A673 (cell line): ENCODE measurements at regions of chr13 and their contacts with region 1.

Region 1: DNA sequence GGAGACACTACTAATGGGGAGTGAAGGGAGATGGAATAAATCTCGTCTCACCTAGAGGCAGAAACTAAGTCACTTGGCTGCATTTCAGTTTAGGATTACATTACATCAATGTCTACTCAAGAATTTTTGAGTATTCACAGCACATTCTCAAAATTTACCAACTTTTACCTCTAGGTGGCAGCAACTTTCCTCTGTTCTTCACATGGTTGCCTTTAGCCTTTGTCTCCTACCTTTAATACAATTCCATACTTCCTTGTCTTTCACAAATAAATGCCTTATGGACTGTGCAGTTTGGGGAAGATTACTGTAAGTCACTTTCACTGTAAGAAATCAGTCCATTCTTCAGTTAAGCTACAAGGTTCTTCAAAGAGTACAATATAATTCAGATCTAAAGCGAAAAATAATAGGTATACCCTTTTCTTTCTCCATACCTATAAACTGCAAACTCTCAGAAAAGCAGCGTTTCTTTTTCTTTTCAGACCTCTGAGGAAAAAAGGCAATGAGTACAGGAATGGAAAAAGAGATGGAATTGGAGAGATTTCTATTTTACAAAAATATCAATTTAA is 379.4 kb downstream of the KLF12 start:
- DNase-seq: peak; percentile 90
- H3K4me3 ChIP-seq: no peak overlapping the region
- H3K27ac ChIP-seq: peak overlapping the region; percentile 40
- H3K4me1 ChIP-seq: peaks cover 38% of the 10 kb centered on the region
- H3K27me3 ChIP-seq: no peaks in the 10 kb centered on the region
- CTCF ChIP-seq: peak; percentile 72

Region 2: DNA sequence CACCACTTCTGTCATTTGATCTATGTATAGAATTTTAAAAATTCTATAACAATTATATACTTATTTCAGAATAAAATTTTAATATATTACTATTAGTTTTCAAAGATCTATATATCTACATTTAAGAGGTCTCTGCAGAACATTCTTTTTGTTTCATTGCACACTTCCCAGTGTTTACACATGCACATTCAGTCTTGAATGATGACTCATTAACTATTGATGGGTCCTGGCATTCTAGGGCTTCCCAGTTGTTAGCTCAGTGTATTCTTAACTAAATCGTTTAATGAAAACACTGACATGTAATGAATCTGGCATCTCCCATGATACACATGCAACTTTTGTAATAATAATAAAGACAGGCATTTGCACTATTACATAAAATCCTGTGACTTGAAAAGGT is 54.8 kb after region 1 on chr13:
- CTCF ChIA-PET with region 1: no interaction called
- POLR2A ChIA-PET with region 1: no interaction called
- intact Hi-C with region 1: loop called (anchors 1 kb)
- DNase-seq: peak; percentile 33
- H3K4me3 ChIP-seq: no peak overlapping the region
- H3K27ac ChIP-seq: no peak overlapping the region
- H3K4me1 ChIP-seq: peaks cover 44% of the 10 kb centered on the region
- H3K27me3 ChIP-seq: no peaks in the 10 kb centered on the region
- CTCF ChIP-seq: no peak

Region 3: GRCh38 chr13:73873940-73874830 is 119.4 kb after region 1 on chr13:
- CTCF ChIA-PET with region 1: no interaction called
- POLR2A ChIA-PET with region 1: no interaction called
- intact Hi-C with region 1: no loop called
- DNase-seq: no peak
- H3K4me3 ChIP-seq: no peak overlapping the region
- H3K27ac ChIP-seq: no peak overlapping the region
- H3K4me1 ChIP-seq: no peaks in the 10 kb centered on the region
- H3K27me3 ChIP-seq: no peaks in the 10 kb centered on the region
- CTCF ChIP-seq: no peak

Region 4: DNA sequence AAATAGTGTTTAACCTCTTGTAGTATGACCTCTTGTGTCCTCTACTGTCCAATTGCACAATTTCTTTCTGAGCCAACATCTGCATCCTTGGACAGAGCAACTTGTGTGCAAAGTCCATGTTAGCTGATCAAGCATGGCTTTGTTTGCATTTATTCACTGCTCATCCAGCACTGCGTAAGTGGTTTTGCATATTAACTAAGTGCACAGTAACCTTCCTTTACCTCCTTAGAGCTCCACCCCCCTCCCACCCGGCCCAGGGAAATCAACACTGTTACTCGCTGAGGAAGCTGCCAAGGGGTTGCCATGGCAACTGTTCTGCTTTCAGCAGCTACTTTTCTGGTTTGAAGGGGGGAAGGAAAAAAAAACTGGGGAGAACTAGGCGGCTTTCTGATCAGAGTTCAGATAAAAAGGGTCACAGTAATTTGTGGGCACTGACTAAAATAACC is 532.9 kb after region 1 on chr13:
- CTCF ChIA-PET with region 1: no interaction called
- POLR2A ChIA-PET with region 1: no interaction called
- intact Hi-C with region 1: loop called (anchors 10 kb)
- DNase-seq: peak; percentile 86
- H3K4me3 ChIP-seq: peak overlapping the region; percentile 35
- H3K27ac ChIP-seq: no peak overlapping the region
- H3K4me1 ChIP-seq: peaks cover 38% of the 10 kb centered on the region
- H3K27me3 ChIP-seq: no peaks in the 10 kb centered on the region
- CTCF ChIP-seq: no peak

Region 5: GRCh38 chr13:74675182-74675581 is 920.4 kb after region 1 on chr13:
- CTCF ChIA-PET with region 1: no interaction called
- POLR2A ChIA-PET with region 1: no interaction called
- intact Hi-C with region 1: loop called (anchors 10 kb)
- DNase-seq: peak; percentile 68
- H3K4me3 ChIP-seq: no peak overlapping the region
- H3K27ac ChIP-seq: no peak overlapping the region
- H3K4me1 ChIP-seq: peaks cover 15% of the 10 kb centered on the region
- H3K27me3 ChIP-seq: no peaks in the 10 kb centered on the region
- CTCF ChIP-seq: no peak

Region 6: DNA sequence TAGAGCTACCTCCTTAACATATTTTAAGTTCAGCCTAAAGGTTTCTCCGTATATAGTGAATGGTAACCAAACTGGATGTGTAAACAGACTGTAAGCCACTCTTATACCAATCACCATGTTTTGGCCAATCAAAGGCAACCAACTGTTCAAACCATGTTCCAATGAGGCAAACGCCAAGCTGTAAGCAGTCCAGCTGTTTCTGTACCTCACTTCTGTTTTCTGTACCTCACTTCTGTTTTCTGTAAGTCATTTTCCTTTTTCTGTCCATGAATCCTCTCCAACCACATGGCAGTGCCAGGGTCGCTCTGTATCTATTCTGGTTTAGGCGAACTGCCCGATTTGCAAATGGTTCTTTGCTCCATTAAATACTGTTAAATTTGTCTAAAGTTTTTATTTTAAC is 1758.5 kb after region 1 on chr13:
- CTCF ChIA-PET with region 1: interaction called, 10 read pairs
- POLR2A ChIA-PET with region 1: no interaction called
- intact Hi-C with region 1: no loop called
- DNase-seq: no peak
- H3K4me3 ChIP-seq: no peak overlapping the region
- H3K27ac ChIP-seq: no peak overlapping the region
- H3K4me1 ChIP-seq: no peaks in the 10 kb centered on the region
- H3K27me3 ChIP-seq: no peaks in the 10 kb centered on the region
- CTCF ChIP-seq: no peak